GM12878 (cell line): ENCODE measurements at regions of chr19 and their contacts with region 1.

Region 1: DNA sequence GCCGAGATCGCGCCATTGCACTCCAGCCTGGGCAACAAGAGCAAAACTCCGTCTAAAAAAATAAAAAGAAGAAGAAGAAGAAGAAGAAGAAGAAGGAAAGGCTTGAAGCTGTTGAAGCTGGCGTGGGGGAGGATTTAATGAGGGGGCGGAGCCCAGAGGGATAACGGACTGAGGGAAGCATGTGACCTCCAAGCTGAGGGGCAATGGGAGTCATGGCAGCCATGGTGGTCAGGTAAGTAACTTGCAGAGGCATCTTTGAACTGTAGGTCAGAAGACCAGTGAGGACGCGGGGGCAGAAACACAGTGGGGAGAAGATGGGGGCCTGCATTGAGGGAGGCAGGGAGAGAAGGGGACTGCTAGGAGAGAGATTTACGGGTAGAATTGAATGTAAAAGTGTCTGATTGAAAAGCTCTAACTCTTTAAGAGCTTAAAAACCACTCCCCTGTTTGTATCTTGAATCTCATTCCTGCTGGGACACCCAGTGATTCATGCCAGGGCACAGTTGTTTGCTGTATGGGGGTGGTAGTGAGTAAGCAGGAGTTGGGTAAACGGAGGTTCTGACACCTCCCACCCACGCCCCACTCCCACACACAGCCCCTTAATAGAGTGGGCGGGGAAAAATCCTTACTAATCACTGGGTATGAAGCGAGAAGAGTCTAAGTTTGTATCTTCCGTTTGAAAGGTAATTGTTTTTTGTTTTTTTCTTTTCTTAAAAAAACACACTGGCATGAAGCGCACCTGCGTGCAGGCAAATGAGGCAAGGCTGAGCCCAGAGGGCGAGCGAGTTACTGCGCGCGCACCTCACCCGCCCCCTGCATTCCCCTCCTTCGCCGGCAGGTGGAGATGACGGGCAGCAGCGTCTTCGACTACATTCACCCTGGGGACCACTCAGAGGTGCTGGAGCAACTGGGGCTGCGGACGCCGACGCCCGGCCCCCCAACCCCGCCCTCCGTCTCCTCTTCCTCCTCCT is 13.0 kb downstream of the TMEM160 start:
- DNase-seq: peak; percentile 77
- ATAC-seq: peak; percentile 95
- H3K4me3 ChIP-seq: peak overlapping the region; percentile 77
- H3K27ac ChIP-seq: no peak overlapping the region
- H3K4me1 ChIP-seq: peaks cover 6% of the 10 kb centered on the region; the same call in 1 of the 2 replicates
- H3K27me3 ChIP-seq: no peaks in the 10 kb centered on the region; a peak in 1 of 4 replicates
- CTCF ChIP-seq: peak; percentile 95 to 97 (median 96)
- EP300 ChIP-seq: no peak
- POLR2A ChIP-seq: peak; percentile 50
- RAD21 ChIP-seq: peak; percentile 54; the same call in 1 of the 2 replicates

Region 2: GRCh38 chr19:47047763-47048405 is 12.5 kb after region 1 on chr19:
- CTCF ChIA-PET with region 1: interaction called, 14 read pairs
- POLR2A ChIA-PET with region 1: interaction called, 10 read pairs
- RAD21 ChIA-PET with region 1: interaction called, 6 read pairs
- SMC1A ChIA-PET with region 1: interaction called, 4 read pairs
- in situ Hi-C with region 1: no loop called
- intact Hi-C with region 1: no loop called
- DNase-seq: peak; percentile 64
- ATAC-seq: peak; percentile 89
- H3K4me3 ChIP-seq: peak overlapping the region; percentile 92
- H3K27ac ChIP-seq: peak overlapping the region; percentile 48; the same call in 1 of the 2 replicates
- H3K4me1 ChIP-seq: 0 out of 2 replicates have a peak, but pooled peaks cover 5% of the 10 kb centered on the region
- H3K27me3 ChIP-seq: no peaks in the 10 kb centered on the region
- CTCF ChIP-seq: no peak
- EP300 ChIP-seq: no peak
- POLR2A ChIP-seq: 0 out of 2 replicates have a peak, but pooled peaks have one; percentile 43
- RAD21 ChIP-seq: no peak

Region 3: DNA sequence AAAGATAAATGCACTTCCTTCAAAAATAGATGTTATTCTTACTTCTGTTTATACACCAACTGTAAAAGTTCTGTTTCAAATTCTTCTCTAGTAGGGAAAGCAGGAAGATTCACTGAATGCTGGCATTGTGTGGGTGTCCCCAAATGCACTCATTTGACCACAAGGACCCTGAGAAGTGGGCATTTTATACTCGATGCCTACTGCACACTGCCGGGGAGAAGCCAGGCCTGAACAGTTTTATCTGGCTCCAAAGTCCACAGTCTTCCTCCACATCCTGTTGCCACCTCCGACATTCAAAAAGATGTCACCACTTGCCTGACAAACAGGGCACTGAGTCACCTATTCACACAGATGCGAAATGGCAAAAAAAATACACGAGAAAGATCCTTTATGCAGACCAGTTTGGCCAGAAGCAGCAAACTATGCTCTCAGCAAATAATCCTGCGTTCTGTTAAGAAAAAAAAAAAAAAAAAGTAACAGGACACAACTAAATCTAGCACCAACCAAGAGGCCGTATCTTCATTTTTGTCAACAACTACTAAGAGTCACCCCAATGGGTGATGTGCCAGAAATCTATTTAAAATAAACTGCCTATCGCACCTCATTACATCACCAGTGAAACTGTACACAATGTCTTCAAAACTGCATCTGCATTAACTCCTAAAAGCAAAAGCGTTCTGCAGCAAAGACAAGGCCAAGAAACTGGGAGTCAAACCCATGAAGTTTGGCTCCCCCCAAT is 72.0 kb after region 1 on chr19:
- CTCF ChIA-PET with region 1: interaction called, 10 read pairs
- POLR2A ChIA-PET with region 1: interaction called, 3 read pairs
- RAD21 ChIA-PET with region 1: no interaction called
- SMC1A ChIA-PET with region 1: no interaction called
- in situ Hi-C with region 1: no loop called
- intact Hi-C with region 1: no loop called
- DNase-seq: no peak
- ATAC-seq: no peak
- H3K4me3 ChIP-seq: peak overlapping the region; percentile 98; the same call in 1 of the 2 replicates
- H3K27ac ChIP-seq: peak overlapping the region; percentile 34; the same call in 1 of the 2 replicates
- H3K4me1 ChIP-seq: peaks cover 8% of the 10 kb centered on the region
- H3K27me3 ChIP-seq: no peaks in the 10 kb centered on the region
- CTCF ChIP-seq: no peak
- EP300 ChIP-seq: no peak
- POLR2A ChIP-seq: no peak
- RAD21 ChIP-seq: no peak

Region 4: GRCh38 chr19:47124937-47125668 is 89.7 kb after region 1 on chr19:
- CTCF ChIA-PET with region 1: interaction called, 41 read pairs
- POLR2A ChIA-PET with region 1: no interaction called
- RAD21 ChIA-PET with region 1: interaction called, 15 read pairs
- SMC1A ChIA-PET with region 1: interaction called, 7 read pairs
- in situ Hi-C with region 1: no loop called
- intact Hi-C with region 1: loop called (anchors 2 kb)
- DNase-seq: no peak
- ATAC-seq: peak; percentile 76
- H3K4me3 ChIP-seq: no peak overlapping the region
- H3K27ac ChIP-seq: no peak overlapping the region
- H3K4me1 ChIP-seq: no peaks in the 10 kb centered on the region; the same call in 1 of the 2 replicates
- H3K27me3 ChIP-seq: no peaks in the 10 kb centered on the region
- CTCF ChIP-seq: peak; percentile 59 to 81 (median 65)
- EP300 ChIP-seq: no peak
- POLR2A ChIP-seq: no peak
- RAD21 ChIP-seq: peak; percentile 89

Region 5: GRCh38 chr19:47130591-47131227 is 95.3 kb after region 1 on chr19 and contains the start of gene SAE1:
- CTCF ChIA-PET with region 1: interaction called, 41 read pairs
- POLR2A ChIA-PET with region 1: interaction called, 6 read pairs
- RAD21 ChIA-PET with region 1: interaction called, 15 read pairs
- SMC1A ChIA-PET with region 1: interaction called, 4 read pairs
- in situ Hi-C with region 1: no loop called
- intact Hi-C with region 1: loop called (anchors 2 kb)
- DNase-seq: peak; percentile 95
- ATAC-seq: peak; percentile 92
- H3K4me3 ChIP-seq: peak within 1 kb of the TSS; percentile 94
- H3K27ac ChIP-seq: peak within 1 kb of the TSS; percentile 90
- H3K4me1 ChIP-seq: peaks cover 3% of the 10 kb centered on the region; the same call in 1 of the 2 replicates
- H3K27me3 ChIP-seq: no peaks in the 10 kb centered on the region
- CTCF ChIP-seq: peak; percentile 53 to 81 (median 56); a peak in 5 of 6 replicates
- EP300 ChIP-seq: no peak
- POLR2A ChIP-seq: peak; percentile 94
- RAD21 ChIP-seq: no peak; the same call in 1 of the 2 replicates
- polyA plus RNA-seq, gene SAE1: 62.0 to 90.0 TPM